ENCODE measurements at regions of chr2 and their contacts with region 1.

Region 1: DNA sequence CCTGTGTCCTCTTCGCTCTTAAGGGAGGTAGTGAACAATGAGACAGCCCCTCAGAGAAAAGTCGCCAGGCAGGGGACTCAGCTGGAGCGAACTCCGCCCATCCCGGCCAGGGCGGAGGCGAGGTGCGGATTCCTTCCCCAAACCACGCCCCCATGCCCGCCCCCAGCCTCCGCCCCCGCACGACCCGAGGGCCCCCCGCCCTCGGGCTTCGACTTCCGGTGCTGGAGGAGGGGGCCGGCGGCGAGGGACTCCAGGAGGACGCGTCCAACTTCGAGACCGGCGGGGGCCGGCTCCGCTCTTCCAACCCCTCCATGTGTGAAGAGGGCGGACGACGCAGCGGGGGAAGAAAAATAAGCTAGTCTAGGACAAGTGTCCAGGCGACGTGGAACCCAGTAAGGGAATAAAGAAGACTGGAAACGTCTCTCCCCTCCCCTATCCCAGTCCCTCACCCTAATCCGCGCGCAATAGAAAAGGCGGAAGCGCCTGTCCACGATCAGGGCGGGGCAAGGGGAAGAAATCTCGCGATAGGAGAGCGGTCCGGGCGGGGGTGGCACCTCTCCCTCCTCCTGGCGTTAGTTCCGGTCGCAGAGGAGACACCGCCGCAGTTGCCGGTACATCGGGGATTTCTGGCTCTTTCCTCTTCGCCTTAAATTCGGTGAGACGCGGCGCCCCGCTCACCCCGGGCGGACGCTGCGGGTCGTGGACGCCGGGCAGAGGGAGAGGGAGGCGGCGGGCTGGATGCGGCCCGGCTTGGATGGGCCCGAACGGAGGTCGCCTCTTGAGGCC is at the start of gene BZW1:
- DNase-seq: peak; percentile 95
- ATAC-seq: peak; percentile 89
- H3K4me3 ChIP-seq: peak within 1 kb of the TSS; percentile 89 to 99 (median 92)
- H3K27ac ChIP-seq: peak within 1 kb of the TSS; percentile 95
- H3K4me1 ChIP-seq: peaks cover 52% of the 10 kb centered on the region
- H3K27me3 ChIP-seq: no peaks in the 10 kb centered on the region; a peak in 1 of 5 replicates
- CTCF ChIP-seq: no peak; the same call in 1 of the 2 replicates
- EP300 ChIP-seq: peak in 1 of 2 experiments; percentile 22; a peak in 1 of 4 replicates
- POLR2A ChIP-seq: peak; percentile 90 to 96
- RAD21 ChIP-seq: no peak
- total RNA-seq, gene BZW1: 384 and 709 TPM in 2 replicates

Region 2: DNA sequence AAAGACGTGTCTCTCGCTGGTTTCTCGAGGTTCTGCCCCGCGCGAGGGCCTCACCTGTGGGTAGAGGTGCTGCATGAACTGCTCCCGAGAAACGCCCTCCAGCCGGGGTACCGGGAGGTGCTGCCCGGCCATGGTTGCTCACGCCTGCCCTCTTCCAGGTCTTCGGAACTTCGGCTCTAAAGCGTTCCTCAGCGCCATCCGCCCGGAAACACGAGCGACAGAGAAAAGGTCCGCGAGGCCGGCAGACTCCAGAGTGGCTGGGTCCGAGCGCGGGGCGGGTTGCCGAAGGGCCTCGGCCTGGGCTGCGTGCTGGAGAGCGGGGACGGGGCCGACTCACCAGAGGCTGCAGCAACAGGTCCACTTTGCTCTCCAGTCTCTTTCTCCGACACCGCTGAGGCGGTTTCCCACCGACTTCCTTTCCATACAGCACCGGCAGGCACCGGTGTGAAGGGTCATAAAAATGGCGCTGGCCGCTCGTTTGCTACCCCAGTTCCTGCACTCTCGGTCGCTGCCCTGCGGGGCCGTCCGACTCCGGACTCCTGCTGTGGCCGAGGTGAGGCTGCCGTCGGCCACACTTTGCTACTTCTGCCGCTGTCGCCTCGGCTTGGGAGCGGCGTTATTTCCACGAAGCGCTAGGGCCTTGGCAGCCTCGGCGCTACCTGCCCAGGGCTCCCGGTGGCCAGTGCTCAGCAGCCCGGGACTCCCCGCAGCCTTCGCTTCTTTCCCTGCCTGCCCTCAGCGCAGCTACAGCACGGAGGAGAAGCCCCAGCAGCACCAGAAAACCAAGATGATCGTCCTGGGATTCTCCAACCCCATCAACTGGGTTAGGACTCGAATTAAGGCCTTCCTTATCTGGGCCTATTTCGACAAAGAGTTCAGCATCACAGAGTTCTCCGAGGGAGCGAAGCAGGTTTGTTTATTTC is 855.9 kb before region 1 on chr2 and contains the starts of genes MAIP1 and TYW5:
- CTCF ChIA-PET with region 1: no interaction called
- POLR2A ChIA-PET with region 1: no interaction called
- in situ Hi-C with region 1: loop called (anchors 25 kb)
- intact Hi-C with region 1: no loop called
- DNase-seq: peak; percentile 81
- ATAC-seq: peak; percentile 93
- H3K4me3 ChIP-seq: peak within 1 kb of the TSS; percentile 86 to 96 (median 94)
- H3K27ac ChIP-seq: peak within 1 kb of the TSS; percentile 91
- H3K4me1 ChIP-seq: peaks cover 50% of the 10 kb centered on the region
- H3K27me3 ChIP-seq: no peaks in the 10 kb centered on the region; a peak in 1 of 5 replicates
- CTCF ChIP-seq: peak; percentile 66
- EP300 ChIP-seq: 0 out of 4 replicates have a peak, but pooled peaks of 1 of the 2 experiments have one; percentile 11
- POLR2A ChIP-seq: peak; percentile 95 to 96
- RAD21 ChIP-seq: peak; percentile 54
- total RNA-seq, gene MAIP1: 72.9 and 90.9 TPM in 2 replicates
- total RNA-seq, gene TYW5: 14.6 and 14.8 TPM in 2 replicates

Region 3: DNA sequence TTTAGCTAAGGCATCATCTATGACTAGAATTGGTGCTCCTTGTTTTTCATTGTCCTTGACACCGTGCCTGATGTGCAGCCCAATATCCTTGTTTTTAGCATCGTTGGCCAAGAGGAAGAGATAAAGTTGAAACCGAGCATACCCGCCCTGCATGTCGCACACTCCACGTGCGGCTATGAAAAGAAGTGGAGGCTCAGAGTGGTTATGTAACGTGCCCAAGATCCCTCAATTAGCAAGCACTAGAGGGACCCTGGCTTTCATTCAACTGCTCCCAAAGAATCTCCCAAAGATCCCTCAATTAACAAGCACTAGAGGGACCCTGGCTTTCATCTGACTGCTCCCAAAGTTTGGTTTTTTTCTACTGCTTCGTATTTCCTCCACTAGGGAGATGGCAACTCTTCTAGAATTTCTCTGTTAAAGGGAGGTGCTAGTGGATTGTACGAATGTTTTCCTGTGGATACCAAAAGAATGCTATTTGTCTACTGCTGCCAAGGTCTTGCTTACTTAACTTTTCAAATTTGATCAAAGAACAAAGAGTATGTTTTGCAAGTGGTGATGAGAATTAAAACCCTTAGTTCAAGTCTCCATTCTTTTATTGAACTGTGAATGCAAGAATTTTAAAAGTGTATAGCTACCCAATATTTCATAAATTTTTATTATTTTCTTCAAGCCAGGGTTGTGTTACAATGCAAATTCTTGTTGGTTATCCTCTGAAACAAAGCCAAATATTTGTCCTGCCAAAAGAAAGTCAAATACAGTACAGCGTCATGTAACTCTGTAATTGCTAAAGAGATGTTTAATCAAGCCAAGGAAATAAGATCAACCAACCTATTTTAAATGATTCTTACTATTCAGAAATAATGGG is 133.6 kb before region 1 on chr2:
- CTCF ChIA-PET with region 1: no interaction called
- POLR2A ChIA-PET with region 1: no interaction called
- in situ Hi-C with region 1: no loop called
- intact Hi-C with region 1: no loop called
- DNase-seq: peak; percentile 50
- ATAC-seq: peak; percentile 79
- H3K4me3 ChIP-seq: no peak overlapping the region
- H3K27ac ChIP-seq: peak overlapping the region; percentile 16
- H3K4me1 ChIP-seq: peaks cover 26% of the 10 kb centered on the region
- H3K27me3 ChIP-seq: no peaks in the 10 kb centered on the region
- CTCF ChIP-seq: no peak
- EP300 ChIP-seq: peak in 1 of 2 experiments; percentile 35; a peak in 1 of 4 replicates
- POLR2A ChIP-seq: no peak
- RAD21 ChIP-seq: 0 out of 2 replicates have a peak, but pooled peaks have one; percentile 12

Region 4: GRCh38 chr2:200713003-200713703 is 98.4 kb before region 1 on chr2:
- CTCF ChIA-PET with region 1: interaction called, 27 read pairs
- POLR2A ChIA-PET with region 1: no interaction called
- in situ Hi-C with region 1: loop called (anchors 5 kb)
- intact Hi-C with region 1: loop called (anchors 1 kb)
- DNase-seq: peak; percentile 96
- ATAC-seq: peak; percentile 94
- H3K4me3 ChIP-seq: peak overlapping the region; percentile 35 to 65 (median 50); a peak in 5 of 6 replicates
- H3K27ac ChIP-seq: peak overlapping the region; percentile 41
- H3K4me1 ChIP-seq: peaks cover 20% of the 10 kb centered on the region
- H3K27me3 ChIP-seq: no peaks in the 10 kb centered on the region; a peak in 1 of 5 replicates
- CTCF ChIP-seq: peak; percentile 94
- EP300 ChIP-seq: peak in 1 of 2 experiments; percentile 47; a peak in 1 of 4 replicates
- POLR2A ChIP-seq: peak; percentile 74 to 92
- RAD21 ChIP-seq: peak; percentile 93

Region 5: DNA sequence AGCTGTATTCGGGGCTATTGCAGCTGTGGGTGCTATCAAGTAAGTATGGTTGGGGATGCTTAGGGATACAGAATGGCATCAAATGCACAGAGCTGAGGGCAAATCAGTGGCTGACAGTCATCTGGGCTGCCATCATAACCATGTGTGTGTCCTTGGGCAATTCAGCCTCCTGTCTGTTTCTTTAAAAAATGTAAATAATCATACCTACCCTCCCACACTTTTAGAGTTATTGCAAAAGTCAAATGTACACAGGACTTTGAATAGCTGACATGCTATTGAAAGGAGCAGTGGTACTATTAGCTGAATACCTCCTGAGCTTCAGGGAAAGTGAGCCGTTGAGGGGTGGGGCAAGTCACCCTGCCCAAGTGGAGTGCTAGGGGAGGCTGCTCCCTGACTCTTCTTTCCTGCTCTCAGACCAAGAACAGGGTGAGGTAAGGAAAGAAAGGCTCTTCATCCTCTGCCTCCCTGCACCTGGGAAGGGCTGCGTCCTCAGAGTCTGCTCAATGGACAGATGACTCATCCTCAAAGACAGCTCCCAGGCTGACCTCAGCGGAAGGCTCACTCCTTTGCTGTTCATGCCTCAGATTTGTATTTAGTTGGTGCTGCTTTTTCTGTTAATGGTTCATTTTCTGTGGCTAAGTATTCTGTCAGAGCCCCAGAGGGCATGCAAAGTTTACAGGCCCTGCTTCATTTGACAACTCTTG is 54.8 kb before region 1 on chr2:
- CTCF ChIA-PET with region 1: no interaction called
- POLR2A ChIA-PET with region 1: interaction called, 25 read pairs
- in situ Hi-C with region 1: no loop called
- intact Hi-C with region 1: loop called (anchors 2 kb)
- DNase-seq: peak; percentile 95
- ATAC-seq: peak; percentile 93
- H3K4me3 ChIP-seq: peak overlapping the region; percentile 5 to 59 (median 11); a peak in 5 of 6 replicates
- H3K27ac ChIP-seq: peak overlapping the region; percentile 64
- H3K4me1 ChIP-seq: peaks cover 79% of the 10 kb centered on the region
- H3K27me3 ChIP-seq: no peaks in the 10 kb centered on the region; a peak in 2 of 5 replicates
- CTCF ChIP-seq: no peak
- EP300 ChIP-seq: peak; percentile 33 to 91; a peak in 2 of 4 replicates
- POLR2A ChIP-seq: peak; percentile 37 to 50; a peak in 2 of 4 replicates
- RAD21 ChIP-seq: peak; percentile 22; the same call in 1 of the 2 replicates

Region 6: DNA sequence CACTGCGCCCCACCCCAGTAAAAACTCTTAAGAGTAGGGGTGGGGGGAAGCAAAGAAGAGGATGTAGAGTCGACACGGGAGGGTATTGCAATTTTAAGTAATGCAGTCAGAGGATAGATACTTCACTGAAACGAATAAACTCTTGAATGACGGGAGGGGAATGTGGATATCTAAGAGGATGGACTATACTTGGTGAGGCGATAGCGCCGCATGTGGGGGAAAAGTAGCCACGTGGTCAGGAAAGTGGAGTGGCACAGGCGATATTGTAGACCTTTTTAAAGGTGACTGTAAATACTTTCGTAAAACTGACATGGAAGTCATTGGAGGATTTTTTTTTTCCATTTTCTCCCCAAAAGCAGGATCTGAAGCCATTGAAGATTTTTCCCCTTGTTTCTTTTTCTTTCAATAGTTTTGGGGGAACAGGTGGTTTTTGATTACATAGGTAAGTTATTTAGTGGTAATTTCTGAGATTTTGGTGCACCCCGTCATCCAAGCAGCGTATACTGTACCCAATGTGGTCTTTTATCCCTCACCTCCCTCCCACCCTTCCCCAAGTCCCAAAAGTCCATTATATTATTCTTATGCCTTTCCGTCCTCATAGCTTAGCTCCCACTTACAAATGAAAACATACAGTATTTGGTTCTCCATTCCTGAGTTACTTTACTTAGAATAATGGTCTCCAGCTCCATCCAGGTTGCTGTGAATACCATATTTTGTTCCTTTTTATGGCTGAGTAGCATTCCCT is 39.2 kb after region 1 on chr2:
- CTCF ChIA-PET with region 1: no interaction called
- POLR2A ChIA-PET with region 1: no interaction called
- in situ Hi-C with region 1: no loop called
- intact Hi-C with region 1: no loop called
- DNase-seq: no peak
- ATAC-seq: peak; percentile 7
- H3K4me3 ChIP-seq: no peak overlapping the region
- H3K27ac ChIP-seq: no peak overlapping the region
- H3K4me1 ChIP-seq: no peaks in the 10 kb centered on the region
- H3K27me3 ChIP-seq: no peaks in the 10 kb centered on the region
- CTCF ChIP-seq: no peak
- EP300 ChIP-seq: no peak
- POLR2A ChIP-seq: peak; percentile 16 to 31; a peak in 2 of 4 replicates
- RAD21 ChIP-seq: no peak

Region 7: GRCh38 chr2:200888704-200889625 is 77.4 kb after region 1 on chr2 and contains the starts of genes NIF3L1 and PPIL3:
- CTCF ChIA-PET with region 1: no interaction called
- POLR2A ChIA-PET with region 1: interaction called, 7 read pairs
- in situ Hi-C with region 1: no loop called
- intact Hi-C with region 1: loop called (anchors 2 kb)
- DNase-seq: peak; percentile 99
- ATAC-seq: peak; percentile 90
- H3K4me3 ChIP-seq: peak within 1 kb of the TSS; percentile 79 to 92 (median 90)
- H3K27ac ChIP-seq: peak within 1 kb of the TSS; percentile 97
- H3K4me1 ChIP-seq: peaks cover 34% of the 10 kb centered on the region
- H3K27me3 ChIP-seq: no peaks in the 10 kb centered on the region; a peak in 2 of 5 replicates
- CTCF ChIP-seq: no peak; the same call in none of the 2 replicates
- EP300 ChIP-seq: peak; percentile 30 to 68; a peak in 2 of 4 replicates
- POLR2A ChIP-seq: peak; percentile 69 to 95
- RAD21 ChIP-seq: 0 out of 2 replicates have a peak, but pooled peaks have one; percentile 17
- total RNA-seq, gene NIF3L1: 67.9 and 98.5 TPM in 2 replicates
- total RNA-seq, gene PPIL3: 98.7 and 126 TPM in 2 replicates